ENCODE measurements at regions of chr5 and their contacts with region 1.

Region 1: GRCh38 chr5:134132372-134133034 is 18.0 kb downstream of the TCF7 start:
- DNase-seq: peak; percentile 85
- ATAC-seq: peak; percentile 78
- H3K4me3 ChIP-seq: no peak overlapping the region
- H3K4me3 Mint-ChIP-seq: peak overlapping the region; percentile 64
- H3K27ac ChIP-seq: peak overlapping the region; percentile 36 to 81
- H3K27ac Mint-ChIP-seq: peak overlapping the region; percentile 89
- H3K4me1 ChIP-seq: peaks cover 20 to 61% of the 10 kb centered on the region in 2 donors
- H3K4me1 Mint-ChIP-seq: peaks cover 48% of the 10 kb centered on the region
- H3K27me3 ChIP-seq: no peaks in the 10 kb centered on the region
- H3K27me3 Mint-ChIP-seq: no peaks in the 10 kb centered on the region
- CTCF ChIP-seq: peak; percentile 39

Region 2: DNA sequence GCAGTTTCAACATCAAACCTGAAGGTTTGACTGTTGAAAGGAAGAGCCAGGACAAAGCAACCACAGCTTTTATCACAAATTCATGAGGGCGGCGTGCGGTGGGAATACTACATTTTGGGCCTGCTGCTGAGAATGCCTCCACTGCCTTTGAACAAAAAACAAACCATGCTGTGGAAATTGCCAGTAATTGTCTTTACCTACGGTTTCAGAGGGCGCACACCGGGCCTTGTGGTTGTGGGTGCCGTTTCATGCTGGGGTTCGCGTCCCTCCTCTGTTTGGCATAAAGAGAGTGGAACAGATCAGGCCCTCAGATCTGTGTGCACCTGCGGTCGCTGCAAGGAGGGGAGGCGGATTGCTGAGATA is 45.6 kb before region 1 on chr5:
- CTCF ChIA-PET with region 1: no interaction called
- POLR2A ChIA-PET with region 1: no interaction called
- intact Hi-C with region 1: no loop called
- DNase-seq: no peak
- ATAC-seq: no peak
- H3K4me3 ChIP-seq: no peak overlapping the region
- H3K4me3 Mint-ChIP-seq: no peak overlapping the region
- H3K27ac ChIP-seq: no peak overlapping the region
- H3K27ac Mint-ChIP-seq: no peak overlapping the region
- H3K4me1 ChIP-seq: peaks cover 20 to 22% of the 10 kb centered on the region in 2 donors
- H3K4me1 Mint-ChIP-seq: peaks cover 16% of the 10 kb centered on the region
- H3K27me3 ChIP-seq: no peaks in the 10 kb centered on the region
- H3K27me3 Mint-ChIP-seq: no peaks in the 10 kb centered on the region
- CTCF ChIP-seq: no peak

Region 3: DNA sequence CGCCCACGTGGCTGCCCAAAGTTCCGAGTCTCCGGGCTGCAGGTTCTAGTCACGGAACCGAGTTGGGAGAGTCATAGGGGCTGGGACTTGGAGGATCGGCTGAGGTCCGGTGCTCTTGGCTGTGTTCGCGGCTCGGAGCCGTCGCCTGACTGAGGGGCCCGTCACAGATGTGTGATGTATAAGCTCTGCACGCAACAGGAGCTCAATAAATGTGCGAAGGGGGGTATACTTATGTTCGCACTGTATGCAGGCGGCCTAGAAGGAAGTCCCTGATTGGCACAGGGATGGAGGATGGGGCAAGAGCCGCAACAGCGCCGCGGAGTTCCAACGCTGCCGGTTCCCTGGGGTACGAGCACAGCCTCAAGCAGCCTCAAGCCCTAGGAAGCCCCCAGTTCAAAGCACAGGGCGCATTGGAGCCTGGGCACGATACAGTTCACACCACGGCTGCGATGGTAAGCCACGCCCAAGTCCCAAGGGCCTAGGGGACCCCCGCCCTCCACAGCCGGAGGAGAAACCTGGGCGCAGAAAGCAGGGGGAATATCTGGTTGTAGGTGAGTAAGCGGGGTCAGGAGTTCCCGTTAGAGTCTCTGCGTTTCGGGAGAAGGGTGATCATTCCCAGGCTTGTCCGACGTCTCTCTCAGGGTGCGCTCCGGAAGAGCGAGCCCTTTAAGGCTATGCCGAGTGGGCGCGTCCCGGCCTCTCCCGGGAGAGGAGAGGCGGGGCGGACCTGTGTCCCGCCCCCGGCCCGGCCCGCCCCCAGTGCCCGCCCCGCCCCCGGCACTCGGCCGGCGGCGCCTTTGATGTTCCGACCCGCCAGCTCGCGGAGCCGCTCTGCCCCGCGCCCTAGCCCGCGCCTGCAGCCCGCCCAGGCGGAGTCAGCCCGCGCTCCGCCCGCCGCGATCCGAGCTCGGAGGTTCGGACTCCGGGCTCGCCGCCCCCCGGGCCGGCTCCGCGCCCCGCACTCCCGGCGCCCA is 18.3 kb before region 1 on chr5 and contains the start of gene TCF7:
- CTCF ChIA-PET with region 1: interaction called, 11 read pairs
- POLR2A ChIA-PET with region 1: interaction called, 4 read pairs
- intact Hi-C with region 1: loop called (anchors 2 kb)
- DNase-seq: peak; percentile 86
- ATAC-seq: peak; percentile 89
- H3K4me3 ChIP-seq: peak within 1 kb of the TSS; percentile 64 to 84 (median 82)
- H3K4me3 Mint-ChIP-seq: peak within 1 kb of the TSS; percentile 90
- H3K27ac ChIP-seq: peak within 1 kb of the TSS in 1 of 2 donors; percentile 36
- H3K27ac Mint-ChIP-seq: peak within 1 kb of the TSS; percentile 78
- H3K4me1 ChIP-seq: peaks cover 13 to 32% of the 10 kb centered on the region in 2 donors
- H3K4me1 Mint-ChIP-seq: peaks cover 19% of the 10 kb centered on the region
- H3K27me3 ChIP-seq: peaks cover 0 to 38% (median 16%) of the 10 kb centered on the region in 4 experiments
- H3K27me3 Mint-ChIP-seq: peaks cover 14% of the 10 kb centered on the region
- CTCF ChIP-seq: no peak
- total RNA-seq, gene TCF7: 58.8 and 61.1 TPM in 2 replicates

Region 4: DNA sequence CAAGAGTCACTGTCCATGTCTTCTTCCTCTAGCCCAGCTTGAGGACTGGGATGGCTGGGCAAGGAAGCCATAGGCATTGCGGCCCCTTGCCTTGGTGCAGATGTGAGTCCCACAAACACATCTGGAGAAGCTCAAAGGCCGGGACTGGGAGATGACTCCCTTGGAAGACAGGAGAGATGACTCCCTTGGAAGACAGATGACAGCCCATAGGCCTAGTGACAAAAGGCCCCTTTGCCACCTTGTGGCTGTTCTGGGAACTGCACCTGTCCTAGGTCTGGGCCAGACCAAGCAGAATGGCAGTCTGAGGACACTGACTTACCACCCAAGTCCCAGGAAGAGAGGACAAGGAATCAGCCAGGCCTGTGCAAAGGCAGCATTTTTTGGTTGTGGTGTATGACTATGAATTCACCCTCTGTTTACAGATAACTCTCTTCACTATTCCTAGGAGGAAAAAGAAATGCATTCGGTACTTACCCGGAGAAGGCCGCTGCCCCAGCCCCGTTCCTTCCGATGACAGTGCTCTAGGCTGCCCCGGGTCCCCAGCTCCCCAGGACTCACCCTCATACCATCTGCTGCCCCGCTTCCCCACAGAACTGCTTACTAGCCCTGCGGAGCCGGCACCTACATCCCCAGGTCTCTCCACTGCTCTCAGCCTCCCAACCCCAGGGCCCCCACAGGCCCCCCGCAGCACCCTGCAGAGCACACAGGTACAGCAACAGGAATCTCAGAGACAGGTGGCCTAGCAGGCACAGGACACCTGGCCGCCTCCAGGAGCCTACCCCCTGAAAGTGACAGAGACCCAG is 13.5 kb after region 1 on chr5:
- CTCF ChIA-PET with region 1: interaction called, 38 read pairs
- POLR2A ChIA-PET with region 1: interaction called, 3 read pairs
- intact Hi-C with region 1: no loop called
- DNase-seq: peak; percentile 85
- ATAC-seq: peak; percentile 89
- H3K4me3 ChIP-seq: no peak overlapping the region
- H3K4me3 Mint-ChIP-seq: no peak overlapping the region
- H3K27ac ChIP-seq: no peak overlapping the region
- H3K27ac Mint-ChIP-seq: peak overlapping the region; percentile 11
- H3K4me1 ChIP-seq: no peaks in the 10 kb centered on the region
- H3K4me1 Mint-ChIP-seq: peaks cover 7% of the 10 kb centered on the region
- H3K27me3 ChIP-seq: no peaks in the 10 kb centered on the region
- H3K27me3 Mint-ChIP-seq: no peaks in the 10 kb centered on the region
- CTCF ChIP-seq: peak; percentile 96